ENCODE measurements at regions of chr3 and their contacts with region 1.

Region 1: DNA sequence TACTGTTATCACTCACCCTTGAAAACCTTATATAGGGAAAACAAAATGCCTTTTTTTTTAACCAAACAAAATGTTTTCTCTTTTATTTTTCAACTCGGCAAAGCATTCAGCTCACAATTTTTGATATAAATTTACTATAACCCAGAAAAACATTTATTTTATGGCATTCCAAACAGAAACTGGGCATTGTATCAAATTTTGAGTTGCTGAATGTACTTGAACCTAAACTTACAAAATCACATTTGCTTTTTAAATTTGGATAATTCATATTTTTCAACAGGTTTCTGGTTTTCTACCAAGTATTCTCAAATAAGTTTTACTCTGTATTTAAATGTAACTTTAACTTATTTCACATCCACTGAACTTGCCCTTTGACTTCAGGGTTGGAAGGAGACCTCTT is 405.6 kb downstream of the GRM7 start:
- DNase-seq: no peak
- H3K4me3 ChIP-seq: no peak overlapping the region
- H3K27ac ChIP-seq: no peak overlapping the region
- H3K4me1 ChIP-seq: peaks cover 7% of the 10 kb centered on the region
- H3K27me3 ChIP-seq: no peaks in the 10 kb centered on the region
- CTCF ChIP-seq: no peak
- EP300 ChIP-seq: no peak
- POLR2A ChIP-seq: no peak

Region 2: GRCh38 chr3:7238565-7239295 is 27.8 kb before region 1 on chr3:
- intact Hi-C with region 1: loop called in 1 of 4 experiments (anchors 2 kb)
- DNase-seq: no peak
- H3K4me3 ChIP-seq: no peak overlapping the region
- H3K27ac ChIP-seq: no peak overlapping the region
- H3K4me1 ChIP-seq: no peaks in the 10 kb centered on the region
- H3K27me3 ChIP-seq: no peaks in the 10 kb centered on the region
- CTCF ChIP-seq: no peak
- EP300 ChIP-seq: no peak
- POLR2A ChIP-seq: no peak

Measured in ovary (tissue), 10 donors.